Sigmoid colon (tissue), 7 donors: ENCODE measurements at regions of chr6 and their contacts with region 1.

Region 1: GRCh38 chr6:166466178-166467122 is 83.7 kb upstream of the MPC1 start:
- DNase-seq: no peak
- H3K4me3 ChIP-seq: peak overlapping the region in 3 of 4 donors; percentile 21 to 31 (median 28)
- H3K27ac ChIP-seq: peak overlapping the region; percentile 57 to 87 (median 76)
- H3K4me1 ChIP-seq: peaks cover 0 to 25% (median 17%) of the 10 kb centered on the region in 4 donors
- H3K27me3 ChIP-seq: no peaks in the 10 kb centered on the region
- CTCF ChIP-seq: no peak
- EP300 ChIP-seq: no peak
- POLR2A ChIP-seq: no peak

Region 2: GRCh38 chr6:166556871-166557322 is 90.4 kb after region 1 on chr6:
- intact Hi-C with region 1: loop called (anchors 5 kb)
- DNase-seq: peak; percentile 97
- H3K4me3 ChIP-seq: peak overlapping the region in 2 of 4 donors; percentile 14 to 21
- H3K27ac ChIP-seq: peak overlapping the region; percentile 66 to 85 (median 80)
- H3K4me1 ChIP-seq: peaks cover 0 to 52% (median 33%) of the 10 kb centered on the region in 4 donors
- H3K27me3 ChIP-seq: no peaks in the 10 kb centered on the region
- CTCF ChIP-seq: no peak
- EP300 ChIP-seq: peak in 2 of 4 donors; percentile 78 to 88
- POLR2A ChIP-seq: no peak

Region 3: DNA sequence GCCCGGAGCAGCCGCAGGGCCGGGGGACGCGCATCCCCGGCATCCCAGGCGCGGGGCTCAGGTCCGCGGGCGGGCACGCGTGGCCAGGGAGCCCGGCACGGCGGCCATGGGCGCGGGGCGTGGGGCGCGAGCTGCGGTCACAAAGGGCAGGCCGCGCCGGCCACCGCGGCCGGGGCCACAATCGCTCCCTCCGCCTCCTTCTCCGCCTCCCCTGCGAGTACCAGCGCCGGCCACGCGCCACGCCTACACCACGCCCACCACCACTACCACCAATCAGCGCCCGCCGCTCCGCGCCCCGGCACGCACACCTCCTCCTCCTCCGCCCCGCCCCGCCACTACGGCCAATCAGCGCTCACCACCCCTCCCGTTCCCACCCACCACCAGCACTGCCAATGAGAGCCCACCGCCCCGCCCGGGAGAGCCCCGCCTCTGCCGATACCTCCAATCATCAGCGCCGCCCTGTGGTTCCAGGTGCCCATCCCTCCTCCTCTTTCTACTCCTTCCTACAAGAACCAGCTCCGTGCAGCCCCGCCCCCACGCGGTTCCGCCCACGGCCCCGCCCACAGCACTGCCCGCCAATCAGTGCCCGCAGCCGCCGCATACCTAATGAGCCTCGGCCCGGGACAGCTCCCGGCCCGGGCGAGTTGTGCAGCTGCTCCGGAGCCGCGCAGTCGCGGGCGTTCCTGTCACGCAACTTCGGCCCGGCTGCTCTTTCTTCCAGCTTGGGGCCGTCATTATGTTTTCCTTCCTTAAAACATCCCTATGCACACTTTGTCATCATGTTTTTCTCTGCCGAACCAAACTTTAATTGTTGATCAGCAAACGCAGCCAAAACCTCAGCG is 160.8 kb after region 1 on chr6 and contains the start of gene RPS6KA2:
- intact Hi-C with region 1: loop called (anchors 2 kb)
- DNase-seq: peak; percentile 100
- H3K4me3 ChIP-seq: peak within 1 kb of the TSS; percentile 52 to 92 (median 85)
- H3K27ac ChIP-seq: peak within 1 kb of the TSS; percentile 89 to 97 (median 93)
- H3K4me1 ChIP-seq: peaks cover 0 to 47% (median 33%) of the 10 kb centered on the region in 4 donors
- H3K27me3 ChIP-seq: no peaks in the 10 kb centered on the region
- CTCF ChIP-seq: no peak
- EP300 ChIP-seq: no peak
- POLR2A ChIP-seq: peak; percentile 82 to 88
- total RNA-seq, gene RPS6KA2: 27.8 to 44.7 (median 32.3) TPM

Region 4: GRCh38 chr6:166691199-166691598 is 224.7 kb after region 1 on chr6:
- intact Hi-C with region 1: loop called (anchors 10 kb)
- DNase-seq: no peak
- H3K4me3 ChIP-seq: no peak overlapping the region
- H3K27ac ChIP-seq: peak overlapping the region in 2 of 4 donors; percentile 35 to 42
- H3K4me1 ChIP-seq: peaks cover 0 to 13% (median 6%) of the 10 kb centered on the region in 4 donors
- H3K27me3 ChIP-seq: no peaks in the 10 kb centered on the region
- CTCF ChIP-seq: no peak
- EP300 ChIP-seq: peak in 1 of 4 donors; percentile 14
- POLR2A ChIP-seq: no peak